Calu3 (cell line): ENCODE measurements at regions of chr2 and their contacts with region 1.

Region 1: GRCh38 chr2:112626604-112627059 is 19.1 kb upstream of the SLC20A1 start:
- DNase-seq: peak; percentile 74
- H3K4me3 Mint-ChIP-seq: peak overlapping the region; percentile 43
- H3K27ac Mint-ChIP-seq: peak overlapping the region; percentile 85
- H3K4me1 Mint-ChIP-seq: peaks cover 61% of the 10 kb centered on the region
- H3K27me3 Mint-ChIP-seq: no peaks in the 10 kb centered on the region
- CTCF ChIP-seq: peak; percentile 89

Region 2: DNA sequence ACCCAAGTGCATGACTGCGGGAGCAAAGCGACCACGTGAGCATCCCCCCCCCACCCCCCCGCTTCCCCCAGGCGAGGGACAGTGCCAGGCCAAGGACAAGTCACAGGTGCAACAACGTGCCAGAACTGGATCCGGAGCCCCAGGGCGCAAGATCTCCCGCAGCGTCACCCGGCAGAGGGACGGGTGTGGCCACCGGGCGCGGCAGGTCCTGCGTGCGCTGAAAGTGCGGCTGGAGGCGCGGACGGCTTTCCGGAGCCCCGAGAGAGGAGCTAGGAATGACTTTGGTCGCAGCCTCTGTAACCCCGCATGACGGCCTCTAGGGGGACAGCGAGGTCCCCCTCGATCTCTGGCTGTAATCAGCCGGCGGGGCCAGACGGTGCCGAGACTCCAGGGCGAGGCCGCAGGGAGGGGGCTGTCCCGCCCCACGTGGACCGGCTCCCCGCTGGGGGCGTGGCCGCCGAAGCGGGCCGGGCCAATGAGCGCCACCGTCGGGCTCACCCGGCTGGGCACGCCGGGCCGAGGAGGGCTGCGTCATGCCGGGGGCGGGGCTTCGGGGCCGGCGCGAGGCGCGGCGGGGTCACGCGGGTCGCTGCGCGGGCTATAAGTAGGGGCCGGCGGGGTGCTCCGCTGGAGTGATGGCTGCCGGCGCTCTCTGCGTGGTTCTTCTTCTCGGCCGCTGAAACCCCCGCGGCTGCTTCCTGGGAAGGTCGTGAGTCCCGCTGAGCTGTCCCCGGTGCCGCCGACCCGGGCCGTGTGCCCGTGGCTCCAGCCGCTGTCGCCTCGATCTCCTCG is 18.9 kb after region 1 on chr2 and contains the start of gene SLC20A1:
- CTCF ChIA-PET with region 1: interaction called, 18 read pairs
- intact Hi-C with region 1: loop called (anchors 1 kb)
- DNase-seq: peak; percentile 99
- H3K4me3 Mint-ChIP-seq: peak within 1 kb of the TSS; percentile 88
- H3K27ac Mint-ChIP-seq: peak within 1 kb of the TSS; percentile 95
- H3K4me1 Mint-ChIP-seq: peaks cover 58% of the 10 kb centered on the region
- H3K27me3 Mint-ChIP-seq: no peaks in the 10 kb centered on the region
- CTCF ChIP-seq: peak; percentile 58
- total RNA-seq, gene SLC20A1: 71.7 and 84.5 TPM in 2 replicates

Region 3: DNA sequence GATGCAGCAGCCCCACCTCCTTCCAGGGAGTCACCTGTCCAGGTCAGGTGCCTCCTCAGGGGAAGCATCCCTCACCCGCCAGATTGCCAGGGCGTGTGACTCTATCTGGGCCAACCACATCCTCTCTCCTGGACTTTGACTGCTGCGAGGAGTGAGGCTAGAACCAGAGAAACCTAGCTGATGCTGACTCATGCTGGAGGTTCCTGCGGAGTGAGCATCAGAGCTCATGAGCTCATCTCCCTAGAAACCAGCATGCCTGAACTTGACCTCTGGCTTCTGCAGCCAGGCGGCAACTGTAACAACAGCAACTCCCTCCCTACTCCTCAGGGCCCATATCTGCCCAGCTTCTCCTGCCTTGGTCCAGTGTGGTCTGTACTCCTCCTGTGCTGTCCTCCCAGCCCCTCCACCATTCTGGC is 65.9 kb after region 1 on chr2:
- CTCF ChIA-PET with region 1: interaction called, 5 read pairs
- intact Hi-C with region 1: loop called (anchors 2 kb)
- DNase-seq: peak; percentile 77
- H3K4me3 Mint-ChIP-seq: no peak overlapping the region
- H3K27ac Mint-ChIP-seq: peak overlapping the region; percentile 76
- H3K4me1 Mint-ChIP-seq: peaks cover 42% of the 10 kb centered on the region
- H3K27me3 Mint-ChIP-seq: no peaks in the 10 kb centered on the region
- CTCF ChIP-seq: no peak

Region 4: DNA sequence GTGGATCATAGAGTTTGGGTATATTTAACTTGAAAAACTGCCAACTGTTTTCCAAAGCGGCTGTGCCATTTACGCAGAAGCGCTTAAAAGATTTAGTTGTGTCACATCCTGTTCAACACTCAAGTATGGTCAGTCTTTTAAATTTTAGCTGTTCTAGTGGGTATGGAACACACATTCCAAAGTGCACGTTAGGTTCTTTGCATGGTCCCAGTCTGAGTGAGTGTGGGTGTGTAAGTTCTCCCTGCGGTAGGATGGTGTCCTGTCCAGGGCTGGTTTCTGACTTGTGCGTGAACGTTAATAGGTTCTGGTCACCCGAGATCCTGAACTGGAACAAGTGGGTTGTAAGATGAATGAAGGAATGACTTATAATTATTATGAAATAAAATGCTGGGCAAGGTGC is 322.8 kb after region 1 on chr2:
- CTCF ChIA-PET with region 1: no interaction called
- intact Hi-C with region 1: no loop called
- DNase-seq: no peak
- H3K4me3 Mint-ChIP-seq: no peak overlapping the region
- H3K27ac Mint-ChIP-seq: no peak overlapping the region
- H3K4me1 Mint-ChIP-seq: no peaks in the 10 kb centered on the region
- H3K27me3 Mint-ChIP-seq: no peaks in the 10 kb centered on the region
- CTCF ChIP-seq: no peak

Region 5: GRCh38 chr2:113283704-113284284 is 657.2 kb after region 1 on chr2:
- CTCF ChIA-PET with region 1: no interaction called
- intact Hi-C with region 1: no loop called
- DNase-seq: peak; percentile 89
- H3K4me3 Mint-ChIP-seq: peak overlapping the region; percentile 55
- H3K27ac Mint-ChIP-seq: peak overlapping the region; percentile 98
- H3K4me1 Mint-ChIP-seq: peaks cover 90% of the 10 kb centered on the region
- H3K27me3 Mint-ChIP-seq: no peaks in the 10 kb centered on the region
- CTCF ChIP-seq: no peak